PC-3 (cell line): ENCODE measurements at regions of chr3 and their contacts with region 1.

Region 1: DNA sequence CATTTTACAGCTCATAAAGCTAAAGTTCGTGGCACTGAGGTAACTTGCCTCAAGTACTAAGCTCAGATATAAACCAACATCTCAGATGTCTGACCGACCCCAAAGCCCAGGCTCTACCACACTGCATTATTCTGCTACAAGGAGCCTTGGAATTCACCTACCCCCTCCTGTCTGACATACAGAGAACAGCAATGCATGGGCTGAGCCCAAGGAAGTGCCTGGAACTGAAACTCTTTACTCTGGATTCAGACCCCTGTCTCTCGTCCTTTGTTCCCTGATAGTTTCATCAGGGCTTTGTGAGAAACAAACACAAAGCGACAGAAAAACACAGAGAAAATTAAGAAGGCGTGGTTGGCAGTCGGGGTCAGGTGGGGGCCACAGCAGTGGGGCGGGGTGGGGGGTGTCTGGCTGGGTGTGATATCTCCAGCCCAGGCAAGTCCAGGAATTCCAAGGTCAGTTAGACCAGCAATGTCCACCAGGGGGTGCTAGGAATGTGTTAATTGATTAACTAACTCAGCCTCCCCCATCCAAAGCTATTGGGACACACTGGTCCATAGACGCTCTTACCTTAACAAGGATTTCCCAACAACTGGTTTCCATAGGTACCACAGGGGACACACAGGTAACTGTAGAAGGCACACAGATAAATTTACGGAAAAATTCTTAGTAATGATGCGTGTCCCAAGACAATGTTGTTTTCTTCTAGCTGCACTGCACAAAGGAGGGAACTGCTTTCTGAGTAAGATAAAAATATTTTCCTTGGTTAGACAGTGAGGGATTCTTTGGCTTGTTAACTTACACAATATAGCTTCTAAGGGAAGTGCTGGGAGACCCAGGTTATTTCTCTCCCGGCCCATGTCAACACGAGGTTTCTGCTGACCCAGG is 18.8 kb upstream of the SSUH2 start:
- DNase-seq: peak; percentile 92
- ATAC-seq: peak; percentile 84
- H3K4me3 ChIP-seq: no peak overlapping the region
- H3K27ac ChIP-seq: no peak overlapping the region
- H3K4me1 ChIP-seq: peaks cover 6% of the 10 kb centered on the region
- H3K27me3 ChIP-seq: no peaks in the 10 kb centered on the region
- CTCF ChIP-seq: peak; percentile 75

Region 2: DNA sequence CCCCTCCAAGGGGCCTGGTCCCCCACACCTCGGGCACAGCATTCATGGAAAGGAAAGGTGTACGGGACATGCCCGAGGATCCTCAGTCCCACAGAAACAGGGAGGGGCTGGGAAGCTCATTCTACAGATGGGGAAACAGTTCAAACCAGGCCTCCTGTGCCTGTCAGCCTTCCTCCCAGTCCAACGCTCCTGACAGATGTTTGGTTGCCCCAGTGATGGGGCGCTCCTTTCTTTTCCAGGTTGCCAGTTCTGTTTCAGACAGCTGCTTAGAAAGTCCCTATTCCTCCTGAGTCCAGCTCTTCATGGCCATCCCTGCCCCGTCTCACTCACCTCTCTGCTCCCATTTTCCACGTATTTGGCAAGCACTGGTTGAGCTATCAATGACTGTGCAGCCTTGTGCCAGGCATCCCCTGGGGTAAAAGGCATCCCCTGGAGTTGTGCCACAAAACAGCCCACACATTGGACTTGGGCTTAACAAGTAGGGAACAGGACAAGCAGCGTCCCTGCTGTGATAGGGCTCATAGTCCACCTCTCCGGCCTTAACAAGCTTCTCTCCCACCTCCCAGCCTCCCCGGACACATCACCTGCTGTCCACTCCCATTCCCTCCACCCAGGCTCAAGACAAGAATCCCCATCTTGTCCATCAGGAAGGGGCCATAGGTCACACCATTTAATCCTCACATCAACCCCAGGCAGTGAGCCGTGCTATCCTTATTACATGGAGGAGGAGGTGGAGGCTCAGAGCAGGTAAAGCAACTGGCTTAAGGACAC is 99.4 kb after region 1 on chr3:
- CTCF ChIA-PET with region 1: no interaction called
- POLR2A ChIA-PET with region 1: no interaction called
- intact Hi-C with region 1: no loop called
- DNase-seq: no peak
- ATAC-seq: no peak
- H3K4me3 ChIP-seq: no peak overlapping the region
- H3K27ac ChIP-seq: no peak overlapping the region
- H3K4me1 ChIP-seq: peaks cover 22% of the 10 kb centered on the region; the same call in 1 of the 2 replicates
- H3K27me3 ChIP-seq: no peaks in the 10 kb centered on the region
- CTCF ChIP-seq: no peak

Region 3: DNA sequence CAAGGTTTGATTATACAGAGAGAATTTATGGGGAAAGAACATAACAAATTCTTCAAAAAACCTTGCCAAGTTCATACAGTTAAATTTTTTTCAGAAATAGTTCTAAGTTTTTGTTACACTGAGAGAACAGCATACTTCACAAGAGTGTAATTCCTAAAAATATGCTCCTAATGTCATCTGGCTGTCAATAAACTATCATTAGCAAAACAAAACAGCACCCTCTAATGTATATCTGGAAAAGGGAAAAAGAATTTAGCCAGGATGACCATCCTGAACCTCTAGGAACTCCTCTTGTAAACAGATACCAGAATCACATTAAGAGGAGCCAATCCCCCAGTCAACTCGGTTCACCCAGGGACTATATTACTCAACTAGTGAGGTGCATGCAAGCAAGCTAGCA is 236.6 kb after region 1 on chr3:
- CTCF ChIA-PET with region 1: no interaction called
- POLR2A ChIA-PET with region 1: no interaction called
- intact Hi-C with region 1: loop called (anchors 10 kb)
- DNase-seq: peak; percentile 14
- ATAC-seq: peak; percentile 37; the same call in 1 of the 2 replicates
- H3K4me3 ChIP-seq: no peak overlapping the region
- H3K27ac ChIP-seq: no peak overlapping the region
- H3K4me1 ChIP-seq: no peaks in the 10 kb centered on the region
- H3K27me3 ChIP-seq: no peaks in the 10 kb centered on the region
- CTCF ChIP-seq: peak; percentile 44; the same call in 1 of the 2 replicates